ENCODE measurements at regions of chr10 and their contacts with region 1.

Region 1: DNA sequence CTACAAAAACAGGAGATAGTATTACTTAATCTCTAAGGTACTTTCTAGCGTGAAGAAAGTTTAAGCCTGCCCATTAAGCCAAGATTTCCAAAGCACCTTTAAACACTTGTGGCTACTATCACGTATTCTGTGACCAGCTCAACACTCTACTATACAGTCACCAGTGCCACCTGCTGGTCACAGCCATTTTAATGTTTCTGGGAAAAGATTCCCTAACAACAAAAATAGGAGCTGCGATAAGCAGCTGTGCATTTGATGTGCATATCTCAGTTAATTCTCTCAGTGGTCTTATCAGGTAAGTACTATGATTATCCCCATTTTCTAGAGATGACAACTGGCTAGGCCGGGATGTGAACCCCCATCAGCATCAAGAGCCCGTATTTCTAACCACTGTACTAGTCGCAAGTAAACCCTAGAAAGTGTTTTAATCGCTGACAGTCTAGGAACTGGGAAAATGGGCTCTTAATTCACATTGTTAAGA is 860 bp downstream of the SEC31B start:
- DNase-seq: peak; percentile 63
- CTCF ChIP-seq: peak; percentile 54

Region 2: GRCh38 chr10:100081075-100082001 is 437.5 kb before region 1 on chr10 and contains the start of gene CPN1:
- in situ Hi-C with region 1: no loop called
- DNase-seq: no peak
- CTCF ChIP-seq: no peak

Region 3: DNA sequence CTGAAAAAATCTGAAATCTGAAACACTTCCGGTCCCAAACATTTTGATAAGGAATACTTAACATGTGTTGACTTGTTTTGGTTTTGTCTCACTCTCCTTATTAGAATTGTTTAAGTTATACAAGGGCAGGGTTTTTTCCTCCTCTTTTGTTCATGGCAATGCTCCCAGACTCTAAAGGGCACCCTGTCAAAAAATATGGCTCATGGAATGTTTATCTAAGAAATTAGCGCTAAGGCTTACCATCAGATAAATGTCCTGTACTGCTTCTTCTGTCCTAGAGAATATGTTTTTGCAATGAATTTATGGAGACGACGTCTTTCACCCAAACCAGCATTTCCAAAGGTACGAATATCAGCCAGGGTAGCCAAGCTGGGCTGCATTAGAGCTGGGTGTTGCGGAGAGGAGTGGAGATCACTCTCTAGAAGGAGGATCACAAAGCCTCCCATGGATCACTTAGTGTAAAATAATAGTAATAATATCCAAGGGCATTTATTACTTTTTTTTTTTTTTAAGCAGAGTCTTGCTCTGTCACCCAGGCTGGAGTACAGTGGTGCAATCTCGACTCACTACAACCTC is 379.8 kb before region 1 on chr10:
- in situ Hi-C with region 1: no loop called
- DNase-seq: no peak
- CTCF ChIP-seq: no peak

Region 4: GRCh38 chr10:100346765-100347567 is 171.8 kb before region 1 on chr10 and contains the start of gene SCD:
- in situ Hi-C with region 1: loop called (anchors 10 kb)
- DNase-seq: peak; percentile 95
- CTCF ChIP-seq: no peak

Region 5: GRCh38 chr10:100446130-100446761 is 72.6 kb before region 1 on chr10:
- in situ Hi-C with region 1: loop called (anchors 10 kb)
- DNase-seq: no peak
- CTCF ChIP-seq: no peak